Pancreas (tissue), 10 donors: ENCODE measurements at regions of chr2 and their contacts with region 1.

Region 1: DNA sequence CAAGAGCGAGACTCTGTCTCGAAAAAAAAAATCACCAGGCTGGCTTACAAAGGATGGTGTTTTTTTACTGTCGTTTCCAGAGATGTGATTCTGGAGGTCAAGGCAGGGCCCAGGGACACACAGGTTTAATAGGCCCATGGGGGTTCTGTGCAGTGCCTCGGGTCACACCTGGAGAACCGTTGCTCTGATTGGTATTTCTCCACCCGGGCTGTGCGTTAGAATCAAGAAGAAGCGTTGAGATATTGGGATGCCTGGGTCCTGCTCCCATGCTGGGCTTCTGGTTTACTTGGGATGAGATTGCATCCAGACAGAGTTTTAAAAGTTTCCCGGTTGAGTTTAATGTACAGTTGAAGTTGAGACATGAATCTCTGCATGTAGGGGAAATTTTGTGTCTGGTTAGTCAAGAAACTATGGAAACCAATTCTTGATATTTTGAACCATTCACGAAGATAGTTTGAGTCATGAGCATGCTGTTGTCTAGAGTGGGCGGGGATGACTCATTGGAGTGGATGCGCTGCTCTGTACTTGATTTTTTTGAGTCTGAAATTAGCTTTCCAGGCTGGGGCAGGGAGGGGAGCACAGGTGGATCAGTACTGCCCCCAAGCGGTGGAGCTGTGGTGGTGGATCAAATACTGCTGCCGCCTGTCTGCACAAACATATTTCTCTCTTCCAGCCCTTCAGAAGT is 50.1 kb downstream of the GREB1 start:
- DNase-seq: peak in 5 of 6 donors; percentile 57 to 77 (median 70)
- ATAC-seq: peak; percentile 68 to 91 (median 86)
- H3K4me3 ChIP-seq: no peak overlapping the region
- H3K27ac ChIP-seq: no peak overlapping the region
- H3K4me1 ChIP-seq: peaks cover 0 to 7% (median 0%) of the 10 kb centered on the region in 3 donors
- H3K27me3 ChIP-seq: no peaks in the 10 kb centered on the region
- CTCF ChIP-seq: peak; percentile 58 to 82 (median 71)

Region 2: GRCh38 chr2:10254373-10255151 is 1329.4 kb before region 1 on chr2:
- intact Hi-C with region 1: no loop called
- DNase-seq: peak in 3 of 6 donors; percentile 20 to 46 (median 43)
- ATAC-seq: no peak
- H3K4me3 ChIP-seq: no peak overlapping the region
- H3K27ac ChIP-seq: no peak overlapping the region
- H3K4me1 ChIP-seq: no peaks in the 10 kb centered on the region
- H3K27me3 ChIP-seq: no peaks in the 10 kb centered on the region
- CTCF ChIP-seq: no peak

Region 3: GRCh38 chr2:11140492-11140891 is 443.5 kb before region 1 on chr2:
- intact Hi-C with region 1: loop called in 1 of 3 experiments (anchors 10 kb)
- DNase-seq: no peak
- ATAC-seq: no peak
- H3K4me3 ChIP-seq: no peak overlapping the region
- H3K27ac ChIP-seq: no peak overlapping the region
- H3K4me1 ChIP-seq: no peaks in the 10 kb centered on the region
- H3K27me3 ChIP-seq: no peaks in the 10 kb centered on the region
- CTCF ChIP-seq: no peak